Posterior vena cava (tissue), 2 donors: ENCODE measurements at regions of chr10 and their contacts with region 1.

Region 1: GRCh38 chr10:131660427-131660826 is 240.4 kb upstream of the PPP2R2D start:
- DNase-seq: no peak

Region 2: GRCh38 chr10:130512936-130513335 is 1147.5 kb before region 1 on chr10:
- intact Hi-C with region 1: no loop called
- DNase-seq: no peak

Region 3: DNA sequence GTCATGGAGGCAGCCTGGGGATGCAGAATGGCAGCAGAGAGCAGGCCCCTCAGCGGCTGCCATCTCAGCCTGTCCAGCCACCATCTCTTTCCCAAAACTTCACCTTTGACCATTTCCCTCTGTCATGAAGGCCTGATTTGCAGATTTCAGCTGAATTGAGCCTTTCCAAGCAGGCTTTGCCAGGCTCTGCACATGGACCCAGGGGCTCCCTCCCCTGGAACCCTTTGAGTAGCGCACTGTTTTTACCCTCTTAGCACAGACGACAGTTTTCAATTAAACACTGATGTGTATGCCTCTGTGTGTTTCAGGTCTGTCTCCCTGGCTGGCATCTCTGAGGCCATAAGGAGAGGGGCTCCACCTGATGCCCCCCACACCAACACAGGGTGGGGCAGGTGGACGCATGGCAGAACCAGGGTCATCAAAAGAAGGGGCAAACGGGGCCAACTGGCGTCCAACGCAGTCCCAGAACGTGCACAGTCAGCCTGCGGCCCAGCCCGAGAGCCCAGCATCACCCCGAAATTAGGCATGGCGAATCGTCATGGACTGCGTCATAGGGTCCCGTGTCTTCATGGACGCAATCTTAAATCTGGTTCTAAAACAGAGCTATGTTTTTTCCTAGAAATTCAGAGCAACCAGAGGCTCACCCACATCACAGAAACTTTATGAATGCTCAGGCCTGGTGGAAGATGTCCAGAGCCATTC is 163.9 kb before region 1 on chr10:
- intact Hi-C with region 1: no loop called
- DNase-seq: peak; percentile 38

Region 4: GRCh38 chr10:131686781-131687412 is 26.5 kb after region 1 on chr10:
- intact Hi-C with region 1: loop called in 1 of 2 experiments (anchors 2 kb)
- DNase-seq: no peak

Region 5: GRCh38 chr10:131774681-131775085 is 114.3 kb after region 1 on chr10:
- intact Hi-C with region 1: no loop called
- DNase-seq: no peak